Tibial artery (tissue), 4 donors: ENCODE measurements at regions of chr5 and their contacts with region 1.

Region 1: DNA sequence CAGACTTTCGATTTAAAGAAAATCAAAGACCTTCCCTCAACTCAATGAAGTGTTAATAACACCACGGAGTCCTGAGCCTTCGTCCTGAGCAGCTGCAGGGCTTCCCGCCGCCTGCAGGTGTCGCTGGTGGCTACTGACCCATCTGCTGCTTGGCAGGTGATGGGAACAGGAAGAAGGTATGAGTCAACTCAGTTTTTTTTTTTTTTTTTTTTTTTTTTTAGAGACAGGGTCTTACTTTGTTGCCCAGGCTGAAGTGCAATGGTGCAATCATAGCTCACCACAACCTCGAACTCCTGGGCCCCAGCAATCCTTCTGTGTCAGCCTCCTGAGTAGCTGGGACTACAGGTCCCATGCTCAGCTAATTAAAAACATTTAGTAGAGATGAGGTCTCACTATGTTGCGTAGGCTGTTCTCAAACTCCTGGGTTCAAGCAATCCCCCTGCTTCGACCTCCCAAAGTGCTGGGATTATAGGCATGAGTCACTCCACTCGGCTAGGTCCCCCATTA is 185.7 kb upstream of the IL12B start:
- DNase-seq: peak; percentile 45 to 84
- H3K4me3 ChIP-seq: no peak overlapping the region
- H3K27ac ChIP-seq: no peak overlapping the region
- H3K4me1 ChIP-seq: peaks cover 0 to 24% (median 19%) of the 10 kb centered on the region in 4 donors
- H3K27me3 ChIP-seq: no peaks in the 10 kb centered on the region
- CTCF ChIP-seq: peak; percentile 57 to 70

Region 2: GRCh38 chr5:159752622-159753275 is 236.8 kb after region 1 on chr5:
- intact Hi-C with region 1: loop called (anchors 10 kb)
- DNase-seq: peak; percentile 52 to 80
- H3K4me3 ChIP-seq: no peak overlapping the region
- H3K27ac ChIP-seq: peak overlapping the region; percentile 66 to 69
- H3K4me1 ChIP-seq: peaks cover 0 to 45% (median 8%) of the 10 kb centered on the region in 4 donors
- H3K27me3 ChIP-seq: no peaks in the 10 kb centered on the region
- CTCF ChIP-seq: no peak

Region 3: DNA sequence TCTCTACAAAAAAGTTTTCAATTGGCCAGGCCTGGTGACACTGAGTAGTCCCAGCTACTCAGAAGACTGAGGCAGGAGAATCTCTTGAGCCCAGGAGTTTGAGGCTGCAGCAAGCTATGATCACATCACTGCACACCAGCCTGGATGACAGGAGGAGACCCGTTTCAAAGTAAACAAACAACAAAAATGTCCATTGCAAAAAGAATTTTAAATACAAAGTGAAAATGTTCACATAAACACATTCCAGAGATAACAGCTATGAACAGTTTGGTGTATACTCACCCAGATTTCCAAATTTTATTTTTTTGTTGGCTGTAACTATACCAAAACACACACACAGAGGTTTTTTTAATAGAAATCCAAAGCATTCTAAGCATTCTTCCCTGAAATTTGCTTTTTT is 440.1 kb after region 1 on chr5:
- intact Hi-C with region 1: no loop called
- DNase-seq: no peak
- H3K4me3 ChIP-seq: no peak overlapping the region
- H3K27ac ChIP-seq: no peak overlapping the region
- H3K4me1 ChIP-seq: peaks cover 0 to 13% (median 0%) of the 10 kb centered on the region in 4 donors
- H3K27me3 ChIP-seq: no peaks in the 10 kb centered on the region
- CTCF ChIP-seq: no peak